ENCODE measurements at regions of chr19 and their contacts with region 1.

Region 1: DNA sequence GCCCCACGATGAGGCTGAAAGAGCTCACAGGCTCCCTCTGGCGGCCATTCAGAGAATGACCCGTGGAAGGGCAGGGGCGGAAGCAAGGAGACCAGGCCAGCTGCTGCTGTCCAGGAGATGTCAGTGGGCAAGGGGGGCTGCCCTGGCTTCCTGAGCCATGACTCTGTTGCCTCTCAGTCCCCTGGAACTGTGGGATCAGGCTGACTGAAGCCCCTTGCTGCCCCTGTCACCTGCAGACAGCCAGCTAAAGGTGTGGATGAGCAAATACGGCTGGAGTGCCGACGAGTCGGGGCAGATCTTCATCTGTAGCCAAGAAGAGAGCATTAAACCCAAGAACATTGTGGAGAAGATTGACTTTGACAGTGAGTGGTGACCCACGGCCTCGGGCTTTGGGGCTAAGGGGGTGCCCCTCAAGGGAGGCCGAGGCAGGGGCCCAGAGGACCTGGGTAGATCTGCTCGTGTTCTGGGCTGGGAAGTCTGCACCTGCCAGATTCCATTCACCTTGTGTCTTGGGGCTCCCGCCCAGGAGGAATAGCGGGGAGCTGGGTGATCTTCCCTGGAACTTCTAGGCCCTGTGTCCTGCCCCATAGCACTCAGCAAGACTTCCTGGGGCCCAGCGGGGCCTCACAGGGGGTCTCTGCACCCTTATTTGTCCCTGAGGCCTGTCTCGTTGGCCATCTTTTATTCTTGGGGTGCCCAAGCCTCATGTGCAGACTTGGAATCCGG is 12.5 kb upstream of the ACTN4 start:
- DNase-seq: peak in 9 of 10 donors; percentile 62 to 80 (median 73)
- H3K4me3 ChIP-seq: peak overlapping the region in 1 of 59 donors; percentile 12
- H3K27ac ChIP-seq: peak overlapping the region in 52 of 59 donors; percentile 19 to 84 (median 66)
- H3K27me3 ChIP-seq: no peaks in the 10 kb centered on the region
- CTCF ChIP-seq: peak; percentile 82 to 98 (median 96)

Region 2: GRCh38 chr19:38514812-38515633 is 119.9 kb before region 1 on chr19:
- intact Hi-C with region 1: loop called in 1 of 2 experiments (anchors 10 kb)
- DNase-seq: peak; percentile 38 to 80 (median 64)
- H3K4me3 ChIP-seq: peak overlapping the region in 28 of 59 donors; percentile 1 to 57 (median 26)
- H3K27ac ChIP-seq: peak overlapping the region in 13 of 59 donors; percentile 3 to 75 (median 36)
- H3K27me3 ChIP-seq: no peaks in the 10 kb centered on the region
- CTCF ChIP-seq: peak; percentile 44 to 92 (median 83)

Region 3: GRCh38 chr19:38544034-38544958 is 90.6 kb before region 1 on chr19:
- intact Hi-C with region 1: loop called in 1 of 2 experiments (anchors 5 kb)
- DNase-seq: peak; percentile 30 to 94 (median 84)
- H3K4me3 ChIP-seq: peak overlapping the region in 56 of 59 donors; percentile 5 to 69 (median 45)
- H3K27ac ChIP-seq: peak overlapping the region in 58 of 59 donors; percentile 19 to 94 (median 82)
- H3K27me3 ChIP-seq: no peaks in the 10 kb centered on the region
- CTCF ChIP-seq: peak; percentile 45 to 80 (median 70)